Ascending aorta (tissue), 2 donors: ENCODE measurements at regions of chrX and their contacts with region 1.

Region 1: GRCh38 chrX:54639346-54640102 is 109.5 kb downstream of the GNL3L start:
- DNase-seq: peak; percentile 85 to 97
- H3K4me3 ChIP-seq: peak overlapping the region; percentile 53 to 54
- H3K27ac ChIP-seq: peak overlapping the region; percentile 80 to 87
- H3K4me1 ChIP-seq: no peaks in the 10 kb centered on the region
- H3K27me3 ChIP-seq: no peaks in the 10 kb centered on the region
- CTCF ChIP-seq: peak; percentile 55 to 56 (median 55)

Region 2: DNA sequence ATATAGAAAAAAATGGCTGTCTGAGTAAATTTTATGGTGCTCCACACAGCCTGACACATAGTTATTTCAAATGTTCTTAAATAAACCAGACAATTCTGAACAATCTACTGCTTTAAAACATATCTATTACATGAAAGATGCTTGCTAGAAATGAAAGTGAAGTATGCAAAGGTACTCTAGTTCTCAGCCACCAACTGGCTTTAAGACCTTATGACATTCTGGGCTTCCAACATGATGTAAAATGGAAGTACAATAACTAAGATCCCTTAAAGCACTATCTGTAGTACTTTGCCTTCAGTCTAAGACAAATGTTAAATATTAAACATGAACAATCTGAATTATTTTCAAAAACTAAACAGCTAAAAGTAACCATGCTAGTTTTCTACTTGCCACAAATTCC is 970.3 kb before region 1 on chrX:
- intact Hi-C with region 1: no loop called
- DNase-seq: no peak
- H3K4me3 ChIP-seq: no peak overlapping the region
- H3K27ac ChIP-seq: no peak overlapping the region
- H3K4me1 ChIP-seq: no peaks in the 10 kb centered on the region
- H3K27me3 ChIP-seq: no peaks in the 10 kb centered on the region
- CTCF ChIP-seq: no peak

Region 3: GRCh38 chrX:54182864-54183608 is 456.5 kb before region 1 on chrX and contains the start of gene FAM120C:
- intact Hi-C with region 1: loop called (anchors 10 kb)
- DNase-seq: peak in 1 of 2 donors; percentile 73
- H3K4me3 ChIP-seq: peak within 1 kb of the TSS; percentile 69 to 78
- H3K27ac ChIP-seq: peak within 1 kb of the TSS; percentile 86 to 91
- H3K4me1 ChIP-seq: peaks cover 0 to 3% of the 10 kb centered on the region in 2 donors
- H3K27me3 ChIP-seq: no peaks in the 10 kb centered on the region
- CTCF ChIP-seq: no peak
- total RNA-seq, gene FAM120C: 1.6 TPM

Region 4: DNA sequence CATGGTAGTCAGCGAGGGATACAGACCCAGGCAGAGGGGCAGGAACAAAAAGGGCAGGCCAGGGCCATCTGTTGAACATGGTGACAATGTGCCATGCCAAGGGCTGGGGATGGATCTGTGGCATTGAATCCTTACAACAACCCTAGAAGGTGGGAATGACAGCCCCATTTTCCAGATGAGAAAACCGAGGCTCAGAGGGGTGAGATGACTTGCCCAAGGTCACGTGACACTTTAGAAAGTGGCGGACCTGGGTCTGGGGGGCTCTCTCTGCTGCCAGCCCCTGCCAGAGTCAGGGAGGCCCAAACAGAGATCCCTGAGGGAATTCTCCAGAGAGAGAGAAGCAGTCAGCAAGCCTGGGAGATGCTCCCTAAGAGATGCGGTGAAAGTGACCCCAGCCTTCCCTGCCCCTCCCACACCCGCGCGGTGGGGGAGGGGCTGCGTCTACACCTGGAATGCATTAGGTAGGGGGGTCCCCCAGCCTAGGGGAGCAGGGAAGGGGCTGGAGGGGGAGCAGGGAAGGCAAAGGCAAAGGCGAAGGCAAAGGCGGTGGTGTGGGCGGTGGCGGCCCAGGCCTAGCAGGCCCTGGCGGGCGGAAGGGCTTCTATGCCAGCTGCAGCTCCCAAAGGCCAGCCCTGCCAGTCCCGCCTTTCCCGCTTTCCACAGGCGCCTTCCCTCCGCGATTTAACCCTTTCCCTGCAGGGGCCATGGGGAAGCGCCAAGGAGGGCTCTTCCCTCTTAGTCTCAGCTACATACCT is 156.5 kb before region 1 on chrX:
- intact Hi-C with region 1: loop called (anchors 5 kb)
- DNase-seq: no peak
- H3K4me3 ChIP-seq: peak overlapping the region; percentile 26 to 51
- H3K27ac ChIP-seq: peak overlapping the region; percentile 67 to 69
- H3K4me1 ChIP-seq: peaks cover 0 to 3% of the 10 kb centered on the region in 2 donors
- H3K27me3 ChIP-seq: no peaks in the 10 kb centered on the region
- CTCF ChIP-seq: no peak

Region 5: DNA sequence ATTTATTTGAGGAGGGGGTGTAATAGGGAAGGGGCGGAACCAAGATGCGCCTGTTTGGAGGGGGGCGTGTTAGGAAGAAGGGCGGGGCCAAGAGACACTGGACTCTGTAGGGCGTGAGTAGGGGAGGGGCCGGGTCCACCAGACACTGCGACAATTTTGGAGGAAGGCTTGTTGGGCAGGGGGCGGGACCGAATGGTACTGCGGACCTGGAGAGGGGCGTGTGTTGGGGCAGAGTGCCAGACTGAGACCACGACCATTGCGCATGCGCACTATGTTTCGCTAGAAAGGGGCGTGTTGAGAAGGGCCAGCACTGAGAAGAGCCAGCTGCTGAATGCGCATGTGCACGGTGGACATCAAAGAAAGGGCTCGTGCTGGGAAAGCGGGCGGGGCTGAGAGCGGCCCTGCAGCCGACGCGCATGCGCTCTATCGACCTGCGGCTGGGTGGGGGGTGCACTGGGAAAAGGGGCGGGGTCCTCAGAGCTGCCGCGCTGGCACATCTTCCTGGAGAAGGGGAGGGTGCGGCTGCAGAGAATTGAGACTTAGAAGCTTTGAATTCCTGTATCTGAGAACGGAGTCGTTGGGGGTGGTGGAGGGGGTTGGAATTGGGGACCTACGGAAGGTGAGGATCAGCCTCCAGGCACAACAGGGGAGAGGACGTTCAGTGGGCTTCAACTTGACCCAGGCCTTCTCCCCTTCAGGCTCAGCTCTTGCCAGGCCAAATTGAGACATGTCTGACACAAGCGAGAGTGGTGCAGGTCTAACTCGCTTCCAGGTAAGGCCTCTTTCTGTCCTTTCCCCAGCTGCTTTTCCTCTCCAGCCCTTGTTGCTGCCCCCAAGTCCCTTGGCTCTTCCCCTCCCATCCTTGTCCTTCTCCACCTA is 169.3 kb after region 1 on chrX:
- intact Hi-C with region 1: loop called (anchors 1 kb)
- DNase-seq: peak; percentile 84 to 95
- H3K4me3 ChIP-seq: peak overlapping the region; percentile 56 to 66
- H3K27ac ChIP-seq: peak overlapping the region; percentile 82 to 88
- H3K4me1 ChIP-seq: peaks cover 0 to 9% of the 10 kb centered on the region in 2 donors
- H3K27me3 ChIP-seq: no peaks in the 10 kb centered on the region
- CTCF ChIP-seq: no peak

Region 6: DNA sequence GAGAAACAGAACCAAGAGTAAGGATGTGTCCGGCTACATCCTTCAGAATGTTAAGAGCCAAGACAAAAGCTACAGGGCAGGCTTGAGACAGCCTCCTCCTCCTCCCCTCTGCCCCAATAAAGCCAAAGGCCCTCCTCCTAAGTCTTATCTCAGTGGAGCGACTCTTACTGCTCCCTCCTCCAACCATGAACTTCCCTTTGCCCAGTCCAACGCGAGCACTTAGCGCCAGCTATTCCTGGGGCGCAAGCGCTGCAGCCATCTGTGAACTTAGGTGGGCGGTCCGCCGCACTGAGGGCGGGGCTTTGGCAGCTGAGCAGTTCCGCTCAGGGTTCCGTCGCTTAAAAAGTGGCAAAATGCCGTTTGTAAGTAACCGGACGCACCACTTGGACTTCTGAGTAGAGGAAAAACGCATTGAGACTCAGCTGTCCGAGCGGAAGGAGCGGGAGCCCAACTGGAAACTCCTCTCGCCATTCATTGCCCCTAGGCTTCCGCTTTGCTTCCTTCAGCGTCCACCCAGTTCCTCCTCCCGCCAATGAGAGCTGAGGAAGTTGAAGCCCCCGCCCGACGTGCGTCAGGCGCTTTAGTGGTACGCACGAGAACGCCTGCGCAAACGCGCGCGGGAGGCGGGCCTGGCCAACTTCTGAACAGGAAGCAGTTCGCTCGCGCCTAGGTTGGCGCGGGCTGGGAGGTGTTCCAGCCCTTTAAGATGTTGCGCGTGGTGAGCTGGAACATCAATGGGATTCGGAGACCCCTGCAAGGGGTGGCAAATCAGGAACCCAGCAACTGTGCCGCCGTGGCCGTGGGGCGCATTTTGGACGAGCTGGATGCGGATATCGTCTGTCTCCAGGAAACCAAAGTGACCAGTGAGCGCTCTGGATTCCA is 360.4 kb after region 1 on chrX and contains the start of gene APEX2:
- intact Hi-C with region 1: loop called (anchors 2 kb)
- DNase-seq: peak; percentile 82 to 95
- H3K4me3 ChIP-seq: peak within 1 kb of the TSS; percentile 64 to 68
- H3K27ac ChIP-seq: peak within 1 kb of the TSS; percentile 86 to 87
- H3K4me1 ChIP-seq: peaks cover 0 to 3% of the 10 kb centered on the region in 2 donors
- H3K27me3 ChIP-seq: no peaks in the 10 kb centered on the region
- CTCF ChIP-seq: no peak
- total RNA-seq, gene APEX2: 31.5 TPM

Region 7: DNA sequence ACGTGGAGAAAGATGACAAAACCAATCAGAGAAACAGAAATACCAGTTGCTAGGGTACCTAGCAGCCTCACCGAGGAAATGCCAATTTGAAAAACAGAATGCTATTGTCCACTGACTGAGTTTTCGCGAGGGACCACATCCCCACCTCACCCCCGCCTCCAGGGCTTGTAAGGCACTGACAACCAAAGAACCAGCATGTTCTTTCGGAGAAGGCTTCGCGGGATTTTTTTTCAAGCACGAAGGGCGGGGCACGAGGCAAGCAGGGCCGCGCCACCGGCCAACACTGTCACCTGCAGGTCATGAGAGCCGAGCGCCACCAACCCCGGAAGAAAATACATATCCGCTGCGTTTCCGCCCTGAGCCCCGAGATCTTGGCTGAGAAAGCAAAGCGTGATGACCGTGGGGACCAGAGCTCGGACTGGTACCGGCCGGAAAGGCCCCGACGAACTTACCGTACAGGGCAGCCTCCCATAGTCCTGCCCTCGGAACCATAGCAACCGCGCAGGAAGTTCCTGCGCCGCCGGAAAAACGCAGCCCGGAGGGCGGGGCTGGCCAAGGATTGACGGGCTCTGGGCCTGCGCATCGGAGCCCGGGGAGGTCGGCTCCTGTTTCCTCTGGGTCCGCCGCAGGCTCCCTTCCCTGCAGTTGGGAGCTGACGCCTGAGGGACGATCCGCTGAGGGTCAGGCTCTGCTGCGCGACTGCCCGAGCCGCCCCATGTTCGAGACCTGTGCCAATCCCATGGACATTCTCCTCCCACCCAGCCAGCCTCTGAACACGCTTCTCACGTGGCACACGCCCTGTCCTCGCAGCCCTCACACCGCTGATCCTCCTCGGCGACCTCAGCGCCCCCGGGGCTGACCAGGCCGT is 521.4 kb after region 1 on chrX:
- intact Hi-C with region 1: loop called (anchors 2 kb)
- DNase-seq: peak; percentile 55 to 92
- H3K4me3 ChIP-seq: peak overlapping the region; percentile 46 to 68
- H3K27ac ChIP-seq: peak overlapping the region; percentile 87 to 89
- H3K4me1 ChIP-seq: no peaks in the 10 kb centered on the region
- H3K27me3 ChIP-seq: no peaks in the 10 kb centered on the region
- CTCF ChIP-seq: peak; percentile 24 to 51 (median 51)